PC-9 (cell line): ENCODE measurements at regions of chr4 and their contacts with region 1.

Region 1: GRCh38 chr4:6772223-6772928 is 10.2 kb upstream of the KIAA0232 start:
- DNase-seq: peak; percentile 77 to 89
- H3K4me3 ChIP-seq: no peak overlapping the region
- H3K27ac ChIP-seq: peak overlapping the region; percentile 81
- H3K4me1 ChIP-seq: peaks cover 71% of the 10 kb centered on the region
- H3K27me3 ChIP-seq: no peaks in the 10 kb centered on the region
- CTCF ChIP-seq: no peak

Region 2: GRCh38 chr4:6749341-6750171 is 22.8 kb before region 1 on chr4:
- CTCF ChIA-PET with region 1: no interaction called
- POLR2A ChIA-PET with region 1: interaction called, 8 read pairs
- intact Hi-C with region 1: loop called (anchors 1 kb)
- DNase-seq: peak; percentile 91 to 93
- H3K4me3 ChIP-seq: peak overlapping the region; percentile 35; the same call in 1 of the 2 replicates
- H3K27ac ChIP-seq: peak overlapping the region; percentile 96
- H3K4me1 ChIP-seq: peaks cover 78% of the 10 kb centered on the region
- H3K27me3 ChIP-seq: no peaks in the 10 kb centered on the region
- CTCF ChIP-seq: no peak

Region 3: DNA sequence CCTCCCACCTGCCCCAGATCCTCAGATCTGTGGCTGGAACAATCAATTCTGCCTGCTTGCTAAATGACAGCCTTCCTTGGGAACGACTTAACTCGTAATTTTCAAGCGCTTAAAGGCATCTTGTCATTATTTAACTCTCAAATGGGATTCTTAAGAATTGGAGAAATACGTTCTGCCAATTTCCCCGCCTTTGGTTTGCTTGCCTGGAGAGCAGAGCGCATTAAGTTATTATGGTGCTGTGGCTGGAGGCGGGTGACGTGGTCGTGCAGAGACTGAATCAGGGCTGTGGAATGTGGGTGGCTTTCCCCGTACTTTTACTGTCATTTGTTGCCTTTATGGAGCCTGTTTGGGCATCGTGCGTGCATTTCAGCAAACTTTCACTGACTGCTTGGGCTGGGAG is 741.3 kb after region 1 on chr4:
- CTCF ChIA-PET with region 1: no interaction called
- POLR2A ChIA-PET with region 1: no interaction called
- intact Hi-C with region 1: no loop called
- DNase-seq: peak in 1 of 2 experiments; percentile 68
- H3K4me3 ChIP-seq: no peak overlapping the region
- H3K27ac ChIP-seq: no peak overlapping the region
- H3K4me1 ChIP-seq: no peaks in the 10 kb centered on the region
- H3K27me3 ChIP-seq: no peaks in the 10 kb centered on the region
- CTCF ChIP-seq: no peak